ENCODE measurements at regions of chr6 and their contacts with region 1.

Region 1: GRCh38 chr6:157379656-157380454 is 1.1 kb upstream of the ZDHHC14 start:
- DNase-seq: peak; percentile 94

Region 2: GRCh38 chr6:157323255-157323965 is 56.4 kb before region 1 on chr6 and contains the start of gene TMEM242:
- intact Hi-C with region 1: loop called (anchors 2 kb)
- DNase-seq: peak; percentile 97
- total RNA-seq, gene TMEM242: 18.9 TPM

Region 3: DNA sequence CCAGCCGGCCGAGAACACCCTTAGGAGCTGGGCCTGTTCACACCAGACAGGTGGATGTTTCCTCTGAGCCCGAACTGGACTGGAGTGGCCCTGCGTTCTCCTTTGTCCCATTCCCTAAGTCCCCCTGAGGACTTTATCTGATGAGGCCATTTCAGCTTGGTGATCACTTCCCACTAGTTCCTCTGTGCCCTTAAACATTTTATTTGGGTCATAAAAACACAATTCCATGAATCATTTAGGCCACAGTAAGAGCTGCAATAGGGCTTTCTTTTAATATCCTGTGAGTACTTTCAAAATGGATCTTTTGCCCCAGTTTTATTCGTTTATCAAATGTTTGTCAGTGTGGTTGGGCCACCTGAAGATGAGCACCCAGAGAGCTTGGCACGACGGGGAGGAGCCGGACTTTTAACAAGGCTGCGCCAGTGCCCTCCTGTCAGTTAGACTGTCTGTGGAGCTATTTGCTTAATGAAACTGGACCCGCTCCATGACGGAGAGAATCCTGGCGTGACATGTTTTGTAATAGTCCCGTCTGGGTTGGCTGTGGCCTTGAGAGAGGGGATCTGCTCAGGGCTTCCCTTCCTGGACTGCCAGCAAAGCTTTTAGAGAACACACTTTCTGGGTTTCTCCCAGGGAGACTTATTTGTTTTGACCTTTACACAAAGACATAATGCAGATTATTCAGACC is 54.6 kb after region 1 on chr6:
- intact Hi-C with region 1: loop called (anchors 5 kb)
- DNase-seq: no peak

Region 4: GRCh38 chr6:157597446-157598312 is 217.8 kb after region 1 on chr6:
- intact Hi-C with region 1: loop called (anchors 5 kb)
- DNase-seq: no peak

Region 5: DNA sequence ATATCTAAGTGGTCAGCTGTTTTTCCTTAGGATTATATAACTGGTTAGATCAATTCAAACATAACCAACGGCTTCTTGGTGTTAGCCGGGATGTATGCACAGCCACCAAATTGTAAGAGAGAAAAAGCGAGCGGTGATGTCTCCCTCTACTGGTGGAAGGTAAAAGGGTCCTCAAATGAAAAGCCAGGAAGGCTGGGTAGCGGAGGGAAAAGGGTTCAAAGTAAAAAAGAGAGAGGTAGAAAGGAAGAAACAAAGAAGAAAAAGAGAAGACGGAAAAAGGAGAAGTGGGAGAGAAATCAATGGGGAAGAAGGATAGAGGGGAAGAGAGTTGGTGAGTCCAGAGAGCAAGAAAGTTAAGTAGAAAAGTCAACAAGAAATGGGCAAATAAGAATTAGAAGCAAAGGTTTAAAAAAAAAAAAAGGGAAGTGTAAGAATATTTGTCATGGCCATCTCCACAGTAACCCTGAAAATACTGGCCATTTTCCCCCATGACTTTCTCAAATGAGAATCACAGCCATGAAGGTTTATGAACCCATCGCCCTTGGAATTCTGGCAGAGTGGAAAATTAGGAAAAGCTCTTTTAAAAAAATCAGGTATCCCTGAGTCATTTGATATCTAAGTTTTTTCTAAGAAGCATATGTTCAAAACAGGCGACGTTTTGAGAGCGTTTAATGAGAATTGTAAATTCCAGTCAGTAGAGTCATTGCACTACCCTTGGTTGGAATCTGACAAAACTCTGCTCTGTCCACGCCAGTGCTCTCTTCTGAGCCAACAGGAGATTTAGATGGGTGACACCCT is 287.6 kb after region 1 on chr6:
- intact Hi-C with region 1: loop called (anchors 5 kb)
- DNase-seq: peak; percentile 38

Measured in cardiac septum (tissue), 1 donor.